Tibial artery (tissue), 4 donors: ENCODE measurements at regions of chr10 and their contacts with region 1.

Region 1: GRCh38 chr10:117757086-117757720 is 214.7 kb downstream of the EMX2 start:
- DNase-seq: no peak
- H3K4me3 ChIP-seq: no peak overlapping the region
- H3K27ac ChIP-seq: no peak overlapping the region
- H3K4me1 ChIP-seq: peaks cover 0 to 18% (median 7%) of the 10 kb centered on the region in 4 donors
- H3K27me3 ChIP-seq: peaks cover 0 to 3% of the 10 kb centered on the region in 2 donors
- CTCF ChIP-seq: no peak

Region 2: GRCh38 chr10:117568334-117568733 is 188.9 kb before region 1 on chr10:
- intact Hi-C with region 1: loop called (anchors 10 kb)
- DNase-seq: no peak
- H3K4me3 ChIP-seq: no peak overlapping the region
- H3K27ac ChIP-seq: no peak overlapping the region
- H3K4me1 ChIP-seq: no peaks in the 10 kb centered on the region
- H3K27me3 ChIP-seq: peaks cover 0 to 2% of the 10 kb centered on the region in 2 donors
- CTCF ChIP-seq: no peak

Region 3: DNA sequence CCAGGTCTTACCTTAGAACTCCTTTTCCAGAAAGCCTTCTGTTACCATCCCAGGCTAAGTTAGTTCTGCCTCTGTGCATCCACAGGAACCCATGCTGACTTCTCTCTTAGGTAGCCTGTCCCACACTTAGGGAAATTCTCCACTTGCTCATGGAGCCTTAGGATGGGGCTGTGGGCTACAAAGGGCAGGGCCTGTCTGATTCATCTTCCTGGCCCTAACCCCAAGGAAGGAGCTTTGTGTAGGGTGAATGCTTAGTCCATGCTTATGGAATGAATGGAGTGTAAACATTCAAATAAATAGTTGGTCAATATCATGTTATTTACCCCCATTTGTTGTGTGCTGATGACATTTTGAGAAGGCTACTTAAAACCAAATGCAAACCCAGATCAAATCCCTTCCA is 160.0 kb before region 1 on chr10:
- intact Hi-C with region 1: no loop called
- DNase-seq: no peak
- H3K4me3 ChIP-seq: no peak overlapping the region
- H3K27ac ChIP-seq: no peak overlapping the region
- H3K4me1 ChIP-seq: no peaks in the 10 kb centered on the region
- H3K27me3 ChIP-seq: no peaks in the 10 kb centered on the region
- CTCF ChIP-seq: no peak

Region 4: GRCh38 chr10:117635826-117636225 is 121.4 kb before region 1 on chr10:
- intact Hi-C with region 1: no loop called
- DNase-seq: no peak
- H3K4me3 ChIP-seq: no peak overlapping the region
- H3K27ac ChIP-seq: no peak overlapping the region
- H3K4me1 ChIP-seq: no peaks in the 10 kb centered on the region
- H3K27me3 ChIP-seq: no peaks in the 10 kb centered on the region
- CTCF ChIP-seq: no peak